ENCODE measurements at regions of chr13 and their contacts with region 1.

Region 1: GRCh38 chr13:52128714-52129700 is at the start of gene NEK5:
- DNase-seq: peak in 9 of 10 donors; percentile 16 to 73 (median 51)
- H3K4me3 ChIP-seq: peak within 1 kb of the TSS; percentile 56 to 95 (median 76)
- H3K27ac ChIP-seq: peak within 1 kb of the TSS in 16 of 59 donors; percentile 5 to 68 (median 49)
- H3K27me3 ChIP-seq: no peaks in the 10 kb centered on the region
- CTCF ChIP-seq: peak in 55 of 56 donors; percentile 45 to 85 (median 68)
- total RNA-seq, gene NEK5: 0.60 to 4.5 (median 1.5) TPM

Region 2: DNA sequence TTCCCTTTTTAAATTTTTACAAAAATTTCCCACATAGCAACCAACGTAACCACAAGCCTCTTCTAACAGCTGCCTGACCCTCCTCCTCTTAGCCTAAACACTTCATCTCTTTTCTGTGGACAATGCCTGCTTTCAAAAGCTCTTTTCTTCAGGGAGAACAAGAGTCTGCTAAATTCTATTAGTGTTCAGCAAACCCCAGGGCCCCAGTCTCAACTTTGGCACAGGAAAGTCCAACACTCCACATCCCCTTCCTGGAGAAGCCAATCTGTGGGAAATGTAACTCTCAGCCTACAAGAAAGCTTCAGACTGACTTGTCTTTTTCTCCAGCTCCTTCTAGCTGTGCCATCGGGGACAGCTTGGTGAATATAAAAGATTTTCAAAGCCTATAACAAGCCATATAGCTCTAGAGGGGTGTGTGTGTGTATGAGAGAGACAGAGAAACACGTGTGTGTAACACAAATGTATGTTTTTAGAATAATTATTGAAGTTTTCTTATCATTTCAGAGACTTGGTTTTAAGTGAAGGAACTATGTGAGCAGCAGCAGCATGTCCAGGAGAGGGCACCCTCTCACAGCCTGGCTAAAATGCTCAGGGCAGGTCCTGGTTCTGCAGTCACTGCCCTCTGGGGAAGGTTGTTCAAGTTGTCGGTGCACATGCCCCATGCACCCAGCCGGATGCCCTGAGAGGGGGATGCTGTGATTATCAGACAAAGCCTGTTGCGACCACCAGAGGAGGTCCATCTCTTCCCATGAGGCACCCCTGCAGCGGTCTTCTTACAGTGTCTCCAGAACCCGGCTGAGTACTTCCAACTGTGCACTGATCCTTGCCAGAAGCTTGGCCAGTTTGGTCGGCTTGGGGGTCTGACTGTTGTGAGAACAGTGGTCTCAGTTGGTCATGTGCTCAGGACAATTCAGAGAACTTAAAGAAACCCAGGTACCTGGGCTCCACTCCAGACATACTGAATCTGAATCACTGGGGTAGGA is 232.8 kb before region 1 on chr13:
- intact Hi-C with region 1: loop called (anchors 2 to 10 kb)
- DNase-seq: peak in 7 of 10 donors; percentile 21 to 66 (median 59)
- H3K4me3 ChIP-seq: no peak overlapping the region
- H3K27ac ChIP-seq: no peak overlapping the region
- H3K27me3 ChIP-seq: no peaks in the 10 kb centered on the region
- CTCF ChIP-seq: peak; percentile 24 to 81 (median 66)

Region 3: DNA sequence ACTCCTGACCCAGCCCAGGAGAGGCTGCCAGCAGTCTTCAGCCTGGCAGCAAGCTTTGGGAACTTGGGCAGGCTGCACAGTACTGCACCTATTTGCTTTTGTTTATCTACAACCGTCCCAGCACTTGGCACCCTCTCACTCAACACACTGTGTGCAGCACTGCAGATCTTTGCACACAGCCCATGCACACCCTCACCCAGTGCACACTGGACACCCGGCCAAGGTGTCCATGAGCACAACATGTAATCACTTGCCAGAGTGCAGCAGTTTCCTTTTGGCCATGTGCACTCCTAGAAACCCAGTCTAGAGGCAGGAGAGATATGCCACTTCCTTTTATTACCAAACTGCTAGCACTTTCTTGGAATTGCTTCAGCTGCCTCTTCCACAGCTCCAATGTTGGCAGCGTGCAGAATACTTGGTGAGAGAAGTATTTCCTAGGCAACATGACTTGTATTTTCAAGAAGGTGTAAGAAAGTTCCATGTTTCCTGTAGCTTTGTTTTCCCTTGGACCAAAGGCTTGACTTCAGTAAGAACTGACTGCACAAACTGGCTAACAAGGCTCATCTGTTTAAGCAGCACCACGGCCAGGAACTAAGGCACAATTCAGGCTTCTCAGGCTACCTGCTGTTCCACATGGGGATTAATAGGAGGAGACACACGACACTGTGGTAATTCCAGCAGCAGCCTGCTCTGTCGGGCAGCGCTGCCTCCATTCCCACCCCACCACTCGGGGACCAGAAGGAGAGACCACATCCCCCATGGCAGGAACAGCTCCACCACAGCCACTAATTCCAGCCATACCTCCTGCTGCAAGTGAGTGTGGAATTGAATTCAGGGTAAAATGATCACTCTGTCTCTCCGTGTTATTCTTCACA is 133.1 kb before region 1 on chr13:
- intact Hi-C with region 1: loop called (anchors 5 kb)
- DNase-seq: peak in 2 of 10 donors; percentile 30 to 34
- H3K4me3 ChIP-seq: peak overlapping the region in 6 of 59 donors; percentile 3 to 29 (median 10)
- H3K27ac ChIP-seq: peak overlapping the region in 32 of 59 donors; percentile 5 to 83 (median 52)
- H3K27me3 ChIP-seq: no peaks in the 10 kb centered on the region
- CTCF ChIP-seq: no peak

Region 4: GRCh38 chr13:52011632-52012511 is 117.1 kb before region 1 on chr13 and contains the start of gene ALG11:
- intact Hi-C with region 1: loop called in 1 of 2 experiments (anchors 5 kb)
- DNase-seq: peak; percentile 99 to 100 (median 99)
- H3K4me3 ChIP-seq: peak within 1 kb of the TSS; percentile 64 to 100 (median 92)
- H3K27ac ChIP-seq: peak within 1 kb of the TSS in 53 of 59 donors; percentile 2 to 85 (median 70)
- H3K27me3 ChIP-seq: no peaks in the 10 kb centered on the region
- CTCF ChIP-seq: peak in 26 of 56 donors; percentile 2 to 49 (median 22)
- total RNA-seq, gene ALG11: 21.8 to 45.8 (median 34.2) TPM

Region 5: DNA sequence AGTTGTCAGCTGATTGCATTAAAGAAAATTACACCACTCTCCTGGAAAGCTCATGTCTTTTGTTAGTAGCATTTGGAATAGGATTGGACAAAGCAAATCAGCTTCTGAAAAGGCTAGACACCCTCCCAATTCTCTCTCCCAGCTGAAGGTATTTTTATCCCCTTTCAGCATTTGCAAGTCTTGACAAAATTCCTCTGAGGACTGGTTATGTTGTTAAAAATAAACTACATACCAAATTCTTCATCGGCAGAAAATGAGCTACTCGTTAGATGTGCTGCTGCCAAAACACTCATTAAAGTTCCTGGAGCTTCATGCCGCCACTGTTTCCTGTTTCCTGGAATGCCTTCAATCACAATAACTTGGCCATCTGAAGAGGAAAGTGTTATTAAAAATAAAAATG is 67.4 kb before region 1 on chr13:
- intact Hi-C with region 1: no loop called
- DNase-seq: no peak
- H3K4me3 ChIP-seq: no peak overlapping the region
- H3K27ac ChIP-seq: peak overlapping the region in 2 of 59 donors; percentile 8 to 14
- H3K27me3 ChIP-seq: no peaks in the 10 kb centered on the region
- CTCF ChIP-seq: no peak

Measured in dorsolateral prefrontal cortex (tissue), 120 donors.